Endothelial cell of umbilical vein (primary cell): ENCODE measurements at regions of chr3 and their contacts with region 1.

Region 1: DNA sequence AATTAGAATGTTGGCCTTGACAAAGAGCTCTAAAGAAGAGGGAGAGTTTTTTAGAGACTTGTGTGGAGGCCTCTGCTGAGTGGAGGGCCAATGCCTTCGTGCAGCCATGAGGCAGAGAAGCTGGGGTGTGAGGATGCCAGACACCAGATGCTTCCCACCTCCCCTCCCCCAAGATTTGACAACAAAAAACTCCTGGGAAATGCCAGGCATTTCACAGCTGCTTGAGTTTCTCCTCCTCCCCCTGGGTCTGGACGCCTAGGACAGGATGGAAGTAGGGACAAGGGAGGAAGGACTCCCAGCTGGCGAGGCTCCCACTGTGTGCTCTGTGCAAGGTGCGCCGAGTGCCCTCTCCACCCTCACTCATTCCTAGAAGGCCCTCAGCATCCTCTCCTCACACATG is 20.1 kb downstream of the TGM4 start:
- DNase-seq: no peak
- H3K4me3 ChIP-seq: no peak overlapping the region
- H3K27ac ChIP-seq: no peak overlapping the region
- H3K4me1 ChIP-seq: no peaks in the 10 kb centered on the region
- H3K27me3 ChIP-seq: no peaks in the 10 kb centered on the region
- CTCF ChIP-seq: no peak
- POLR2A ChIP-seq: no peak

Region 2: DNA sequence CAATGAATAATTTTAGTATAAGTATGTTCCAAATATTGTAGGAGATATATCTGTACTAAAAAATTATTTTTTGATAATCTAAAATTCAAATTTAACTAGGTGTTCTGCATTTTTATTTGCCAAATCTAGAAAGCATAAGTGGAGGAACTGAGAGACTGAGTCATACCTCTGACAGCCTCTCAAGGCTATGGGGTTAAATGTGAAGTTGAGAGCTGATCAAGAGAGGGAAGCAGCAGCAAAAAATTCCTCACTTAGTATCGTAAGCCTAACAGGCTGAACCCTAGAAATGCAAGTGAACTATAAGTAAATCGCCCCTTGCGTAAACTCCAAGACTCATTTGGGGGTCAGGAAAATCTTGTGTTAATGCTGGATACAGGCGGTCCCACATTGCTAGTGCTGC is 665.6 kb before region 1 on chr3:
- CTCF ChIA-PET with region 1: no interaction called
- POLR2A ChIA-PET with region 1: interaction called, 11 read pairs
- dilution Hi-C with region 1: no loop called
- intact Hi-C with region 1: no loop called
- DNase-seq: no peak
- H3K4me3 ChIP-seq: no peak overlapping the region
- H3K27ac ChIP-seq: no peak overlapping the region
- H3K4me1 ChIP-seq: no peaks in the 10 kb centered on the region
- H3K27me3 ChIP-seq: peaks cover 14 to 15% of the 10 kb centered on the region in 2 experiments
- CTCF ChIP-seq: no peak
- POLR2A ChIP-seq: no peak

Region 3: DNA sequence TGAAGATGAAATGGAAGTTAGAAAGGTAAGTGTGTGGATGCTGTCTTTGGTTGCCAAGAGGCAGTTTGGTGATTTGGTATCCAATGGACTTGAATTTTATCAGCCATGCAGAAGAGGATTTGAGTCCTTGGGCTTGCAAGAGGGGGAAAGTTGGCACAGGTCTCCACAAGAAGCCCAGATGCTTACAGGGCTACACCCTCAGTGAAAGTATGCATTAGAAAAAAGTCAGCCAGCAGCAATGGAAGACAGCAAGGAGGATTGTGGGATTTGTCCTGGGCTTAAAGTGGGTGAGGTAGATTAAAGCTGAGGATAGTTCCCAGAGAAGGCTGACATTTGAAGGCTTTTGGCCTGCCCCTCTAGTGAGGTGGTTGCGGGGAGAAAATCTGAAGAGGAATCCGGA is 292.7 kb before region 1 on chr3:
- CTCF ChIA-PET with region 1: no interaction called
- POLR2A ChIA-PET with region 1: no interaction called
- dilution Hi-C with region 1: no loop called
- intact Hi-C with region 1: no loop called
- DNase-seq: no peak
- H3K4me3 ChIP-seq: no peak overlapping the region
- H3K27ac ChIP-seq: no peak overlapping the region
- H3K4me1 ChIP-seq: no peaks in the 10 kb centered on the region
- H3K27me3 ChIP-seq: no peaks in the 10 kb centered on the region
- CTCF ChIP-seq: no peak
- POLR2A ChIP-seq: no peak

Region 4: DNA sequence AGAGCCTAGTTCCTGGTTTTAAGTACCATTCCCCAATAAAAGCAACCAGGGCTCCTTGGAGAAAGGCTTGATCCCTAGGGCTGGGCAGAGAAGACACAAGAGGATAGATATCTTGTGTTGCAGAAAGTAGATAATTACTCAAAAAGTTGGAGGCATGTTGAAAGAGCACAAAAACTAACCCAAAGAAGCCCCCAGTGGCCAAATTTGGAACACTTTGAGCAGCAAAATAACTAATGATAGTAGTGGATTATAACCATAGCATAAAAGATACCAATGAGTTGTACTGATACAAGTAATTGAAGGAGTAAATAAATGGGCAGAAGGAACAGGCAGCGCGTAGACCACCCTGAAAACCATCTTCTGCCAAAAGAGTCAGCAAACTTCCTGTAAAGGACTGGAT is 93.6 kb after region 1 on chr3:
- CTCF ChIA-PET with region 1: no interaction called
- POLR2A ChIA-PET with region 1: no interaction called
- dilution Hi-C with region 1: no loop called
- intact Hi-C with region 1: no loop called
- DNase-seq: no peak
- H3K4me3 ChIP-seq: no peak overlapping the region
- H3K27ac ChIP-seq: no peak overlapping the region
- H3K4me1 ChIP-seq: no peaks in the 10 kb centered on the region
- H3K27me3 ChIP-seq: no peaks in the 10 kb centered on the region
- CTCF ChIP-seq: peak; percentile 37 to 48
- POLR2A ChIP-seq: no peak